ENCODE measurements at regions of chr15 and their contacts with region 1.

Region 1: GRCh38 chr15:51132384-51133139 is 37.9 kb upstream of the TNFAIP8L3 start:
- DNase-seq: peak in 1 of 2 donors; percentile 81
- H3K4me3 ChIP-seq: no peak overlapping the region
- H3K27ac ChIP-seq: peak overlapping the region; percentile 58 to 71
- H3K4me1 ChIP-seq: peaks cover 4 to 14% of the 10 kb centered on the region in 2 donors
- H3K27me3 ChIP-seq: no peaks in the 10 kb centered on the region
- CTCF ChIP-seq: peak; percentile 83 to 97 (median 93)

Region 2: DNA sequence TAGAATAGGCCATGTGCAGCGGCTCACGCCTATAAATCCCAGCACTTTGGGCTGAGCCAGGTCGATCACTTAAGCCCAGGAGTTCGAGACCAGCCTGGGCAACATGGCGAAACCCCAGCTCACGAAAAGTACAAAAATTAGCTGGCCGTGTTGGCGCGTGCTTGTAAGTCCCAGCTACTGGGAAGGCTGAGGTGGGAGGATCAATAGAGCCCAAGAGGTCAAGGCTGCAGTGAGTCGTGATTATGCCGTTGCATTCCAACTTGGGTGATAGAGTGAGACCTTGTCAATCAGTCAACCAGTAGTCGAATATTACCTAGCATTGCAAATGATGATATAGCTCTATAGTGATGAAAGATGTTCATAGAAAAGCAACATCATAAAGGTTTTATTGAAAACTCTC is 656.4 kb before region 1 on chr15:
- intact Hi-C with region 1: no loop called
- DNase-seq: no peak
- H3K4me3 ChIP-seq: no peak overlapping the region
- H3K27ac ChIP-seq: no peak overlapping the region
- H3K4me1 ChIP-seq: no peaks in the 10 kb centered on the region
- H3K27me3 ChIP-seq: no peaks in the 10 kb centered on the region
- CTCF ChIP-seq: no peak

Region 3: DNA sequence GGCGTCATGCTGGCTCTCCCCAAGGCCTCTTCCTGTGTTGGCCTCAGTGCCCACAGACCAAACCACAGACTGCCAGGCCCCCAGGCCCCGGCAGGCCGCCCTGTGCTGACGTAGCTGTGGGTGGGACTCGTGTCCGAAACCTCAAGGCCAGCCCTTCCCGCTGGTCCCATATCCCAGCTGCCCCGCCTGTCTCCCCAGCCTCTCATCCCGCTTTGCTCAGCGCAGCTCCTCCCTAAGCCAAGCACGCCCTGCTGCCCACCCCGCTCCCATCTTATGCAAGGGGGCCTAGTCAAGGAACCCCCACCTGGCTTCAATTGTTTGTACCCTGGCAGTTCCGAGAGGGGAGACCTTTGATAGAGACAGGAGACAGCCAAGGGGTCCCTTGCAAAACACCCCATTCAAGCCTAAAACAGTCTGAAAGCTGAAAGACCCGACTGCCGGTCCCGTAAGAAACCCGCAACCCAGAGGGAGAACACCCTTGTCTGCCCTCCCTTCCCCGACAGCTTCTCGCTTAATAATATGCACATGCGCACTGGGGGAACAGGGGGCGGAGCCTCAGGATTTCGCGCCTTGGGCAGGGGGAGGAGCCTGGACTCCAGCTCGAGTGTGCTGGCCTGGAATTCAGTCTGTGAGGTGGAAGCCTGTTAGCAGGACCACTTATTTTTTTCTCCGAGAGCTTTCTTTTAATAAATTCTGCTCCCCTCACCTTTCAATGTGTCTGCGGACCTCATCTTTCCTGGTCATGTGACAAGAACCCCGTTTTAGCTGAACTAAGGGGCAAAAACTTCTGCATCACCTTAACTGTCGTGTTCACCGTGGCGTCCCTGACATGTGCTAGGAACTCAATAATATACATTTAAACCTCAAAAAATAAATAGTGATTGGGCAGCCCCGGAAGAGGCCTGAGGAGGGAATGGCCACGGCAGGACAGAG is 55.1 kb before region 1 on chr15:
- intact Hi-C with region 1: loop called (anchors 5 kb)
- DNase-seq: peak; percentile 50 to 88
- H3K4me3 ChIP-seq: peak overlapping the region in 1 of 2 donors; percentile 54
- H3K27ac ChIP-seq: peak overlapping the region; percentile 81 to 89
- H3K4me1 ChIP-seq: peaks cover 6 to 22% of the 10 kb centered on the region in 2 donors
- H3K27me3 ChIP-seq: no peaks in the 10 kb centered on the region
- CTCF ChIP-seq: no peak

Measured in ascending aorta (tissue), 2 donors.